ENCODE measurements at regions of chr4 and their contacts with region 1.

Region 1: DNA sequence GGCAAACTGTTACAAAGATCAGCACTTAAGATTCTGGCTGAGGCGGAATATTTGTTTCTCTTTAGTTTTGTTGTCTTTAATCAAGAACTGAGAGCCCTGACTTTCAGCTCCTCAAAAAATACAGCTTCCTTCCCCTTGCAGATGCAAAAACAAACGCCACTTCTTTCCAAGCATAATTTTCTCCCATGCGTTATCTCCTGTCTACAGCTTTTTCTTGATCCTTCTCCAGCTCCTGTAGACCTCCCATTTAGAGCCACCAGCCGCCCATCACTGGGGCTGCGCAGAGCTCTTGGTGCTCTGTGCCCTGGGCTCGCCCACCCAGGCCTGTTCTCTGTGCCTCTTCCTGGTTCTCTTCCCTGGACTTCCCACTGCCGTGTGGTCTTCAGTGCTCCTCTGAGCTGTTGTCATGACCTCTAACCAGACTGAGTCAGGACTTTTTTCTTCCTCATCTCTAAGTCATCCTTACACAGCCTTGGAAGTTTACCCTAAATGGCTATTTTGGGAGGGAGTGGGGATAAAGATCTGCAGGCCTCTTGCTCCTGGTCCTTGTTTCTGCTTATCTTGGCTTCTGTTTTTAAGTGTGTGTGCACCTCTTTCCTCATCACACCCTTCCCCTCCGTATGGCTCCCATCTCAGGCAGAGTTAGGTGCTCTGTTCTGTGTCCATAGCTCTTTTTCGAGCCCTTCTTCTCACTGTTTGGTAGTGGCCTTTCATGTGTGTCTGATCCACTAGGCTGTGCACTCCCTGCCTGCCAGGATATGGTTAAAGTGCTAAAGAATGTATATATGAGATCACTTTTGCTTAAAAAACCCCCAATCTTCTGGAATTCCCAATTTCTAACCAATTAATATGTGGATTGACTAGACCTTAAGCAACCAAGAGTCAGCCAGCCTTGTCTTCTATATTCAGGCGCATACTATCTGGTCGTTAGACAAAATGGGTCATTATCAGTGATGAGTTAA is 122.5 kb downstream of the PTTG2 start:
- DNase-seq: peak in 1 of 3 donors; percentile 61
- ATAC-seq: peak; percentile 56 to 57
- H3K4me3 ChIP-seq: no peak overlapping the region
- H3K27ac ChIP-seq: no peak overlapping the region
- H3K4me1 ChIP-seq: peaks cover 25% of the 10 kb centered on the region
- H3K27me3 ChIP-seq: no peaks in the 10 kb centered on the region

Region 2: GRCh38 chr4:38013461-38014366 is 69.0 kb before region 1 on chr4:
- intact Hi-C with region 1: no loop called
- DNase-seq: peak; percentile 61 to 86 (median 80)
- ATAC-seq: peak; percentile 77 to 82
- H3K4me3 ChIP-seq: no peak overlapping the region
- H3K27ac ChIP-seq: peak overlapping the region; percentile 56
- H3K4me1 ChIP-seq: peaks cover 5% of the 10 kb centered on the region
- H3K27me3 ChIP-seq: no peaks in the 10 kb centered on the region

Region 3: GRCh38 chr4:38675146-38676121 is 592.7 kb after region 1 on chr4:
- intact Hi-C with region 1: loop called in 1 of 4 experiments (anchors 5 kb)
- DNase-seq: peak; percentile 69 to 85 (median 72)
- ATAC-seq: peak; percentile 32 to 43
- H3K4me3 ChIP-seq: no peak overlapping the region
- H3K27ac ChIP-seq: no peak overlapping the region
- H3K4me1 ChIP-seq: peaks cover 28% of the 10 kb centered on the region
- H3K27me3 ChIP-seq: no peaks in the 10 kb centered on the region